ENCODE measurements at regions of chr12 and their contacts with region 1.

Region 1: GRCh38 chr12:50314629-50315312 is 31.5 kb upstream of the LIMA1 start:
- DNase-seq: no peak
- ATAC-seq: no peak
- H3K4me3 ChIP-seq: no peak overlapping the region
- H3K27ac ChIP-seq: no peak overlapping the region
- H3K4me1 ChIP-seq: no peaks in the 10 kb centered on the region
- H3K27me3 ChIP-seq: no peaks in the 10 kb centered on the region
- CTCF ChIP-seq: peak; percentile 24 to 71 (median 58)
- POLR2A ChIP-seq: no peak

Region 2: GRCh38 chr12:50084775-50085614 is 229.8 kb before region 1 on chr12 and contains the start of gene SMARCD1:
- intact Hi-C with region 1: loop called in 4 of 10 experiments (anchors 10 kb)
- DNase-seq: peak; percentile 92 to 97 (median 95)
- ATAC-seq: peak; percentile 95 to 97 (median 96)
- H3K4me3 ChIP-seq: peak within 1 kb of the TSS; percentile 80 to 99 (median 94)
- H3K27ac ChIP-seq: peak within 1 kb of the TSS; percentile 90 to 100 (median 98)
- H3K4me1 ChIP-seq: peaks cover 0 to 29% (median 14%) of the 10 kb centered on the region in 12 donors
- H3K27me3 ChIP-seq: no peaks in the 10 kb centered on the region
- CTCF ChIP-seq: peak in 10 of 12 donors; percentile 19 to 83 (median 66)
- POLR2A ChIP-seq: no peak
- total RNA-seq, gene SMARCD1: 13.6 to 35.7 (median 22.0) TPM

Region 3: DNA sequence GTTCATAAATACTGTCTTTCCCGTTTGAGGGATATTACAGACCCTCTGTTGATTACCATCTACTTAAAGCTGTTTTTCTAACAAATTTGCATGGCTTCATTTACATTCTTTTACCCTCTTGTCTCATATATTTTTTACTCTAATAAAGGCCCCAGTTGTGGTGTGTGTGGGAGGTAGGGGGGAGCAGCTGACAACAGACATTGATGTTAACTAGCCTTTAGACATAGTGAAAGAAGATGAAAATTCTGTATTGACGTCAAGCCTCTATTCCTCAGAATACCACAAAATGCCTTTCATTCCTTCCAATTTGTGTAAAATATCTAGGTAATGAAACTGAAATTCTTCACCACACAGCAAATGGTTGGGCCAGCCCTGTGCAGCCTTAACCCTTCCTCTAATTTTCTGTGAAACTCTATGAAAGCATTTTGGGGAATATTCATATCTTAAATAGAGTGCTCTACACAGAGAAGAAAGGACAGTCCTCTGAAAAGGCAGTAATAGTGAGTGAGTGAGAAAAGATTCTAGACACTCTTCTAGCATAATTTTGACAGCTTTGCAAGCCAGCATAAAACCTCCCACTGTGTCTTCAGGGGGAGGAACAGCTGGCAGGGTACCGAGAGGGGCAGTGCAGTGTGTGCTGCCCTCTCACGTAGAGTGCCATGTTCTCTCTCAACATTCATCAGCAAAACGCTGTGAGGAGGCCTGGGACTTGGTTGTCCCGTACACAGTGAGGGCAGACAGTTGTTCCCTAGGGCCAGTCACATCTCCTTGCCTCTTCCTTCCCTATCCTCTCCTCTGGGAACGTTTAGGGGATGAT is 127.5 kb before region 1 on chr12:
- intact Hi-C with region 1: loop called in 6 of 10 experiments (anchors 5 to 10 kb)
- DNase-seq: no peak
- ATAC-seq: peak in 2 of 4 donors; percentile 23 to 25
- H3K4me3 ChIP-seq: no peak overlapping the region
- H3K27ac ChIP-seq: peak overlapping the region in 6 of 12 donors; percentile 15 to 76 (median 36)
- H3K4me1 ChIP-seq: peaks cover 0 to 57% (median 28%) of the 10 kb centered on the region in 12 donors
- H3K27me3 ChIP-seq: no peaks in the 10 kb centered on the region
- CTCF ChIP-seq: no peak
- POLR2A ChIP-seq: no peak

Region 4: DNA sequence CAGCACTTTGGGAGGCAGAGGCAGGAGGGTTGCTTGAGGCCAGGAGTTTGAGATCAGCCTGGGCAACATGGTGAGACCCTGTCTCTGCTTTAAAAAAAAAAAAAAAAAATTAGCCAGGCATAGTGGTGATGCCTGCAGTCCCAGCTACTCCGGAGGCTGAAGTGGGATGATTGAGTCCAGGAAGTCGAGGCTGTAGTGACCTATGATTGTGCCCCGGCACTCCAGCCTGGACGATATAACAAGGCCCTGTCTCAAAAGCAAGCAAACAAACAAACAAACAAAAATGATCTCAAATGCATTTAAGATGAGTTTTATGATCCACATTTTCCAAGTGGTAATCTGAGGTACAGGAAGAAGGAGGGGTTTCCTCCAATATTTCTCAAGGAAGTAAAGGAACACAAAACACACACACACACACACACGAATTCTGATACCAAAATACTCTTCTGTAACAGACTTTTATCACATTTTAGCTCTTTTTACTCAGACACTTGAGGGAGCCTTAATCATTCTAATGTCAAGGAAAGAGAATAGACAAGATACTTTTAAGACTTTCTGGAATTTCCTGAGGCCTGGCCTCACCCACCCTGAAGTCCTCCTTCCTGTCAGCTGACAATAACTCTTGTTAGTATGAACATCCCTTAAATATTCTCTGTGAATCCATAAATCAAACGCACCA is 103.2 kb before region 1 on chr12:
- intact Hi-C with region 1: loop called in 4 of 10 experiments (anchors 5 to 10 kb)
- DNase-seq: no peak
- ATAC-seq: peak in 3 of 4 donors; percentile 27 to 79 (median 64)
- H3K4me3 ChIP-seq: peak overlapping the region in 1 of 12 donors; percentile 26
- H3K27ac ChIP-seq: peak overlapping the region; percentile 19 to 83 (median 70)
- H3K4me1 ChIP-seq: peaks cover 0 to 32% (median 13%) of the 10 kb centered on the region in 12 donors
- H3K27me3 ChIP-seq: no peaks in the 10 kb centered on the region
- CTCF ChIP-seq: peak in 4 of 12 donors; percentile 8 to 35 (median 28)
- POLR2A ChIP-seq: no peak

Region 5: GRCh38 chr12:50297027-50297426 is 17.7 kb before region 1 on chr12:
- intact Hi-C with region 1: no loop called
- DNase-seq: no peak
- ATAC-seq: peak in 1 of 4 donors; percentile 50
- H3K4me3 ChIP-seq: no peak overlapping the region
- H3K27ac ChIP-seq: peak overlapping the region in 10 of 12 donors; percentile 15 to 83 (median 50)
- H3K4me1 ChIP-seq: peaks cover 0 to 29% (median 11%) of the 10 kb centered on the region in 12 donors
- H3K27me3 ChIP-seq: no peaks in the 10 kb centered on the region
- CTCF ChIP-seq: no peak
- POLR2A ChIP-seq: no peak